ENCODE measurements at regions of chr15 and their contacts with region 1.

Region 1: DNA sequence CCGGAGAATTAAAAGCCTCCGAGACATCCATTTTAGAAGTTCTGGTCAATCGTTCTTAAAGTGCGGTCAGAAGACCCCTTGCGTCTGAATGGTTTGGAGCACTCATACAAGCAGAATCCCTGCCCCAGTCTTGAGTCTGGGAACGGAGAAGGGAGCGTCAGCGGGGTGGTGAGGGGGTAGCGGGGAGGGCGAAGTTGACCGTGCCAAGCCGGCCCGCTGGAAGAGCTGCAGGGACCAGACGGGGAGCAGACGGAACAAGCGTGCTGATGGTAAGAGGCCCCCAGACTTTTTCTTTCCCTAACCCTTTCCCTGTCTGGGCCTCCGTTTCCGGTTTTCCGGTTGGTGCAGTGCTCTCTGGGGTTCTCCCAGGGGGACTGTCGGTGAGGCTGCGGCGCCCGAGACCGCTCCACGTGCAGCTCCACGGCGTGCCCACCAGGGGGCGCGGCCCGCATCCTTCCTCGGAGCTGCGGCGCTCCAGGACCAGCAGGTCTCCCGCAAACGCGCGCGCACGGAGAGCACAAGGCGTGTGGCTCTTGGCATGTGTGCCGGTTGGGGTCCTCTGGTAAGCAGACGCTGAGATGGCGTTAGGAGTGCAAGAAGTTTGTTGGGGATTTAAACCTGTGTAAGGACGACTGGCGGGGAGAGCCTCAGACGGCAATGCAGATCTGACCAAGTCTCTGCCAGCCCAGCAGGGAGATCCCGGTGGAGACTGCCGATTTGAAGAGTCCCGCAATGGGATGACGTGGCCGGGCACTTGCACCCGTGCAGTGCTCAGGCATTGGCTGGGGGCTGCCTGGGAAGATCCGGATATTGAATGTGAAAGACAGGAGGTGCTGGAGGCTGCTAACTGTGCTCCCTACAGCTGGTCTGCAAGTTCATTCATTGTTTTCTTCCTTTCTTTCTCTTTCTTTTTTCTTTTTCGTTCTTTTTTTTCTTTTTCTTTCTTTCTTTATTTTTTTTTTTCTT is 19.2 kb upstream of the CORO2B start:
- DNase-seq: peak; percentile 84 to 91
- ATAC-seq: peak; percentile 90 to 96
- H3K4me3 ChIP-seq: peak overlapping the region; percentile 43
- H3K27ac ChIP-seq: peak overlapping the region; percentile 41 to 73; a peak in 5 of 6 replicates
- H3K4me1 ChIP-seq: no peaks in the 10 kb centered on the region
- CTCF ChIP-seq: peak; percentile 97
- EP300 ChIP-seq: no peak
- POLR2A ChIP-seq: no peak
- RAD21 ChIP-seq: peak; percentile 85 to 91

Region 2: GRCh38 chr15:67880651-67881182 is 678.9 kb before region 1 on chr15:
- CTCF ChIA-PET with region 1: no interaction called
- POLR2A ChIA-PET with region 1: no interaction called
- DNase-seq: peak in 1 of 2 experiments; percentile 30
- ATAC-seq: no peak
- H3K4me3 ChIP-seq: no peak overlapping the region
- H3K27ac ChIP-seq: peak overlapping the region; percentile 84 to 93; a peak in 5 of 6 replicates
- H3K4me1 ChIP-seq: peaks cover 47% of the 10 kb centered on the region
- CTCF ChIP-seq: no peak
- EP300 ChIP-seq: no peak
- POLR2A ChIP-seq: no peak
- RAD21 ChIP-seq: no peak

Region 3: GRCh38 chr15:68042156-68042854 is 517.3 kb before region 1 on chr15:
- CTCF ChIA-PET with region 1: no interaction called
- POLR2A ChIA-PET with region 1: no interaction called
- DNase-seq: peak in 1 of 2 experiments; percentile 56
- ATAC-seq: peak; percentile 69 to 80
- H3K4me3 ChIP-seq: no peak overlapping the region
- H3K27ac ChIP-seq: peak overlapping the region; percentile 50 to 54; a peak in 5 of 6 replicates
- H3K4me1 ChIP-seq: peaks cover 30% of the 10 kb centered on the region
- CTCF ChIP-seq: no peak
- EP300 ChIP-seq: no peak
- POLR2A ChIP-seq: no peak
- RAD21 ChIP-seq: no peak; a peak in 2 of 5 replicates

Region 4: GRCh38 chr15:68224546-68225250 is 334.9 kb before region 1 on chr15:
- CTCF ChIA-PET with region 1: no interaction called
- POLR2A ChIA-PET with region 1: no interaction called
- DNase-seq: no peak
- ATAC-seq: no peak
- H3K4me3 ChIP-seq: no peak overlapping the region
- H3K27ac ChIP-seq: no peak overlapping the region
- H3K4me1 ChIP-seq: peaks cover 14% of the 10 kb centered on the region
- CTCF ChIP-seq: no peak
- EP300 ChIP-seq: no peak
- POLR2A ChIP-seq: no peak
- RAD21 ChIP-seq: no peak

Region 5: GRCh38 chr15:68586274-68586961 is 26.8 kb after region 1 on chr15:
- CTCF ChIA-PET with region 1: interaction called, 30 read pairs
- POLR2A ChIA-PET with region 1: no interaction called
- DNase-seq: peak; percentile 68 to 80
- ATAC-seq: peak; percentile 78 to 87
- H3K4me3 ChIP-seq: no peak overlapping the region
- H3K27ac ChIP-seq: peak overlapping the region; percentile 38 to 72; a peak in 5 of 6 replicates
- H3K4me1 ChIP-seq: peaks cover 14% of the 10 kb centered on the region
- CTCF ChIP-seq: no peak
- EP300 ChIP-seq: no peak
- POLR2A ChIP-seq: no peak
- RAD21 ChIP-seq: no peak

Region 6: DNA sequence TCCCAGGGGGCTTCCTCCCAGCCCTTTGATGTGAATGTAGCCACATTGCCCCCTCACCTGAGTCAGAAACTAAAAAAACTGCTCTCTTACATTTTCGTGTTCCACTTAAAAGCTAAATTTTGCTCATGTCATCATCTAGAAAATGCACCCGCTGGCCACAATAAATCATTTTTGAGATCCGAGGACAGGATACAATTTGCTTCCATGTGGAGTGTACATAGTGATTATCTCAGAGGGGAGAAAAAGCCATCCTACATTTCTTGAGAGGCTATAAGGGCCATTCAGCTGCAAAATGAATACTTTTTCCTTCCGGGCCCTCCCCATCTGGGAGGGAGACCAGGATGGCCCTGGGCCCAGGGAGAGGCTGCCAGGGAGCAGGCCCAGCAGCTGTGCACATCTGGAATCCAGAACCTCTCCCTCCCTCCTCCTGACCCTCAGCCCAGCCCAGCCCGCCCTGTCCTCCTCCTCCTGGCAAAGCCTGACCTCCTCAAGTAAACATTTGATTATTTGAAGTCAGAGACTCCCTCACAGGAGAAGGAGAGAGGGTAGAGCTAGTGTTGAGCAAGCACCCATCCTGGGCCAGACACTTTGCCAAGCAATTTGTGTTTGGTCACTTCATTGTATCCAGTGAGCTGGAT is 78.3 kb after region 1 on chr15:
- CTCF ChIA-PET with region 1: interaction called, 25 read pairs
- POLR2A ChIA-PET with region 1: no interaction called
- DNase-seq: no peak
- ATAC-seq: no peak
- H3K4me3 ChIP-seq: no peak overlapping the region
- H3K27ac ChIP-seq: no peak overlapping the region
- H3K4me1 ChIP-seq: peaks cover 11% of the 10 kb centered on the region; the same call in 1 of the 3 replicates
- CTCF ChIP-seq: no peak
- EP300 ChIP-seq: no peak
- POLR2A ChIP-seq: no peak
- RAD21 ChIP-seq: no peak

Region 7: DNA sequence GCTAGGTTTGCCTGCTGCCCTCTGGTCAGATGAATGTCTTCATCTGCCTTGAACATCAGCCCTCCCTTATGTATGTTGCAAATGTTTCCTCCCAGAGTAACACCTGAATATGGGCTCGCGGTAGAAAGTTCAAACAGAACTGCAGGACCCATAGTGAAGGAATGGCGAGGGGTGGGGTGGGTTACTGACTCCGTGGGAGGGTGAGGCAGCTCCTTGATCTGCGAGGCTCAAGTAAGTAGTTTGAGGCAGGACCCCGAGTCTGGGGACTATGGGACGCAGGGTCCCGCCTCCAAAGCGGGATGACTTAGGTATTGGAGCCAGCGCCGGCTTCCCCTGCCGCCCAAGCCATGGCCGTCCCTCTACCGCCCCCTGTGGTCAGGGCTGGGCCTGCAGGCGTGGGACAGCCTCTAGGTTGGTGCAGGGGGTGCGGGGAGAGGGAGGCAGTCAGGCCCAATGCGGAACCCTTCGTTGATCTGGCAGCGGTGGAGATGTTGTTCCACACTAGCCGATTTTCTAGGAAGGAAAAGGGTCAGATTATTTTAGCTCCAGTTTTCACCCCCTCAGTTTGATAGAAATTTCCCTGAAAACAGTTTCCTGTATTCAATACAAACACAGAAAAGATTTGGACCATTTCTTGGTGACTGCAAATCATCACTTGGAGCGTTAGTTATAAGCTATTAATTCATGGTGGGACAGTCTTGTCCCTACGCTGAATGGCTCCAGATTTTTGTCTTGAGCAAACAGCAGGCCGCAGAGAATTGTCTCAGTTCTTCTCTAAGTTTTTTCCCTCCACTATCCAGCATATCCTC is 91.5 kb after region 1 on chr15:
- CTCF ChIA-PET with region 1: interaction called, 110 read pairs
- POLR2A ChIA-PET with region 1: no interaction called
- DNase-seq: peak; percentile 78 to 90
- ATAC-seq: peak; percentile 93 to 99
- H3K4me3 ChIP-seq: no peak overlapping the region
- H3K27ac ChIP-seq: peak overlapping the region in 1 of 2 experiments; percentile 30; a peak in 2 of 6 replicates
- H3K4me1 ChIP-seq: no peaks in the 10 kb centered on the region
- CTCF ChIP-seq: peak; percentile 86
- EP300 ChIP-seq: no peak
- POLR2A ChIP-seq: no peak
- RAD21 ChIP-seq: peak; percentile 79

Region 8: DNA sequence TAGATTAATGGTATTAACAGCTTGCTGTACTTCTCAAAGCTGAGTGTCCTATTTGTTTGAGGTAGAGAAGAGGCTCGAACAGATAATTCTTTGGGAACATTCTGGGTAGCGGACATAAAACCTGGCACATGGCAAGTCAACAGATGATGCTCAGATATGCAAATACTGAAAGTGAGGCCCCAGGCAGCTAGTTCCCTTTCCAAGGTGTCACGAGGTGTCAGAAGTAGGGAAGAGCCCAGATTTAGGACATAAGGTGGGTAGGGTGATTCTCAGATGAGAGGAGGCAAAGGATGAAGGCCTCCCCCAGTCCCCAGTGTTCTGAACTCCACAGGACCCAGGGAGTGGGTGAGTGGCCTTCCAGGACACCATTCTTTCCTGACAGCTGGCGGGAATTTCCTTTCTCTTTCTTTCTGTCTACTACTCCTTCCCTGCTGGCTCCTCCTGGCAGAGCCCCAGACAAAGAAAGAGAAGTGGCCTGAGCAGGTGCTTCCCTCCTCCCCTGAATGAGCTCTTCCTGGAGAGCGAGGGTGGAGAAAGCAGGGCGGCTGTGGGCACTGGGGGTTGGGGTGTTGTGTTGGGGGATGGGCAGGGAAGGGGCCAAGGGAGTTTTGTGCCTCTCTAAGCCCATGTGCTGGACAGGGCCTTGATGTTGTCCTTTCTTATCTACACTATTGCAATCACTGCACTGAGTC is 106.6 kb after region 1 on chr15:
- CTCF ChIA-PET with region 1: interaction called, 452 read pairs
- POLR2A ChIA-PET with region 1: no interaction called
- DNase-seq: no peak
- ATAC-seq: no peak; a peak in 1 of 6 replicates
- H3K4me3 ChIP-seq: no peak overlapping the region
- H3K27ac ChIP-seq: no peak overlapping the region
- H3K4me1 ChIP-seq: no peaks in the 10 kb centered on the region
- CTCF ChIP-seq: no peak
- EP300 ChIP-seq: no peak
- POLR2A ChIP-seq: no peak
- RAD21 ChIP-seq: no peak

Region 9: DNA sequence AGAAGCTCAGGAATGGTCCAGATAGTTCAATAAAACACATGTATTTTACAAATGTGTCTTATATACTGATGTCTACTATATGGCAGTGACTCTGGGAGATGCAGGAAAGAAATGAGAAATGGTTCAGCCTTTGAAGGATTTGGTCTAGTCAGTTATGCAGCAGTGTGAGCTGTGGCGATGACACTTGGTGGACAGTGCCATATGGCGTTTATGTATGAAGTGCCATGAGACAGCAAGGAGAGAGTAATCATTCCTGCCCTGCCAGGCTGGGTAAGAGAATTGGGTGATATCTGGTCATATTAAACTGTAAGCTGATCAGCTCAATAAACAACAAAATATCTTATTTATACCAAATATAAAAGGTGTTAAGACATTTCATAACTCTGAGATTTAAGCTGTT is 308.7 kb after region 1 on chr15:
- CTCF ChIA-PET with region 1: interaction called, 70 read pairs
- POLR2A ChIA-PET with region 1: no interaction called
- DNase-seq: no peak
- ATAC-seq: peak in 1 of 2 experiments; percentile 40; a peak in 1 of 6 replicates
- H3K4me3 ChIP-seq: no peak overlapping the region
- H3K27ac ChIP-seq: no peak overlapping the region
- H3K4me1 ChIP-seq: no peaks in the 10 kb centered on the region
- CTCF ChIP-seq: no peak
- EP300 ChIP-seq: no peak
- POLR2A ChIP-seq: no peak
- RAD21 ChIP-seq: no peak

Measured in A549 (cell line).